ENCODE measurements at regions of chr16 and their contacts with region 1.

Region 1: GRCh38 chr16:2968738-2969544 is at the start of gene PAQR4:
- DNase-seq: peak; percentile 92

Region 2: DNA sequence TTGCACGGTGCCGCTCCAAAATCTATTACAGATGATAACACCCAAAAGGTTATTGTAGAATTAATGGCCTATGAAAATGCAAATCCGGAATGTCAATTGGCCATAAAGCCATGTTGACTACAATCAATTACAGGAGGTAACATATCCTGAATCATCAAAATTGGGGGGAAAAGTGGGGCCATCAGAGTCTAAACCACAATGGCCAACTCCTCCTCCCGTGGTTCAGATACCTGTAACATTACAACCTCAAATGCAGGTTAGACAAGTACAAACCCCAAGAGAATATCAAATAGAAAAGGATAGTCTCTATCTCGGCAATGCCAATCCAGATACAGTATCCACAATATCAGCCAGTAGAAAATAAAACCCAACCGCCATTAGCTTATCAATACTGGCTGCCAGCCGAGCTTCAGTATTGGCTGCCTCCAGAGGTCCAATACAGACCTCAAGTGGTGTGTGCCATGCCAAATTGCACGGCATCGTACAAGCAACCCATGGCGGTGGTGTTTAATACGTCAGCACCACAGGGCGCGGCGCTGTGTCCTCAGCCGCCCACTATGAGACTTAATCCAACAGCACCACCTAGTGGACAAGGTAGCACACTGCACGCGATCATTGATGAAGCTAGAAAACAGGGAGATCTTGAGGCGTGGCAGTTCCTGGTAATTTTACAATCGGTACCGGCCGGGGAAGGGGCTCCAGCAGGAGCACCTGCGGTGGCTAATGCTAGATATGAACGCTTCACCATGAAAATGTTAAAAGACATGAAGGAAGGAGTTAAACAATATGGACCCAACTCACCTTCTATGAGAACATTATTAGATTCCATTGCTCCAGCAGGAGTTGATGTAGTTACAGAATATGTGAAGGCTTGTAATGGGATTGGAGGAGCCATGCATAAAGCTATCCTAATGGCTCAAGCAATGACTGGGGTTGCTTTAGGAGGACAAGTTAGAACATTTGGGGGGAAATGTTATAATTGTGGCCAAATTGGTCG is 42.0 kb before region 1 on chr16:
- CTCF ChIA-PET with region 1: no interaction called
- POLR2A ChIA-PET with region 1: no interaction called
- DNase-seq: peak; percentile 80

Region 3: GRCh38 chr16:2980227-2981086 is 11.5 kb after region 1 on chr16 and contains the start of gene PKMYT1:
- CTCF ChIA-PET with region 1: no interaction called
- POLR2A ChIA-PET with region 1: interaction called, 40 read pairs
- DNase-seq: peak; percentile 99

Region 4: DNA sequence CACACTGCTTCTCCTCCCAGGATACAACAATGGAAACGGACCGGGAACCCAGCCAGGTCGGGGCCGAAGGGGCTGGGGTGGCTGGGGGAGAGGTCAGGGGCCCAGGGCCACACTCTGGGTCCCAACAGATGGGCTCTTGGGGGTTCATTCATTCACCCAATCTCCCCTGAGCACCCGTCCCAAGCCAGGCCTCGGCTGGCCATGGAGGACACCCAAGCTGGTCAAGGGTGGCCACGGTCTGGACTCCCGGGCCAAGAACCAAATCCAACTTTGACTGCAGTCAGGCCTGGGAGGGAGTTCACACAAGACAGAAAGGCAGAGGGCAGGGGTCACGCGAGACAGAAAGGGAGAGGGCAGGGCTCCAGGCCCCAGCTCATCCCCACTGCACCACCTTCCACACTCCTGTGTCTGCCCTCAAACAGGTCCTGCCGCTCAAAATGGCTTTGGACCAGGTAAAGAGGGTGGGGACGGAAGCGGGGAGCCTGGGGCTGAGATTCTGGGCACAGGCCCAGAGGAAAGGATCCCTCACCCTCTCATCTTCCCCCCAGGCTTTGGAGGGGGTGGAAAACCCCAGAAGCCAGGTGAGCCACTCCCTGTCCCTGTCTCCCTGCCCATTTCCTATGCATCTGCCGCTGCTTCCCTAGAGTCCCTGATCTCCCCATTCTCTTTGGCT is 23.6 kb after region 1 on chr16:
- CTCF ChIA-PET with region 1: no interaction called
- POLR2A ChIA-PET with region 1: no interaction called
- DNase-seq: no peak

Region 5: DNA sequence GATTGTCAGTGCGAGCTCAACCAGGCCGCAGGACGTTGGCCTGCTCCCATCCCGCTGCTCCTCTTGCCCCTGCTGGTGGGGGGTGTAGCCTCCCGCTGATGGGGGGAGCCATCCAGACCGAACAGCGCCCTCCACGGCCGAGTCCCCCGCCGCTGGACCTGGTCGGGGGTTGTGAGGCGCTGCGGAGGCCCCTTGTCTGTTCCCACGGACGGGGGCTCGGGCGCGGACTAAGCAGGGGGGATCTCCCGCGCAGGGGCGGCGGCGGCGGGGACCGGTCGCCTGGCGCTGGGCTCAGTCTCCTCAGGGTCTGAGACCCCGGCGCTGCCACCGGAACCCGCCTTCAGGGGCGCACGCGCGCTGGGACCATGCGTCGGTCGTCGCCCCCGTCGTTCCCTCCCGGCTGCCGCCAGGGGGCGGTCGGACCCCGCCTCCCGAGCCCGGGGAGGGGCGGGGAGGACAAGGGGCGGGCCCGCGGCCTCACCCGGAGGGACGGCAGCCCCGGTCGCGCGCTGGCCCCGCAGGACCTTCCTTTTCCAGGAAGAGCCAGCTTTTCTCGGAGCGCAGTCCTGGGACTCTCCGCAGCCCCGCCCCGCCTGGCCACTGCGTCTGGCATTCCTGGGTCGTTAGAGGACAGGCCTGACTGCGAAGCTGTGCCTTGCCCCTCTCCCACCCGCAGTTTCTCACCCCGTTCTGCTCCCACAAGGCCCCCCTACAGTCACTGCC is 90.2 kb after region 1 on chr16:
- CTCF ChIA-PET with region 1: no interaction called
- POLR2A ChIA-PET with region 1: no interaction called
- DNase-seq: peak; percentile 95

Measured in HEK293T (cell line).